PC-3 (cell line): ENCODE measurements at regions of chr1 and their contacts with region 1.

Region 1: GRCh38 chr1:23772049-23772853 is 6.0 kb upstream of the PITHD1 start:
- DNase-seq: peak; percentile 88
- ATAC-seq: peak; percentile 99
- H3K4me3 ChIP-seq: peak overlapping the region; percentile 46; the same call in 1 of the 2 replicates
- H3K27ac ChIP-seq: no peak overlapping the region
- H3K4me1 ChIP-seq: peaks cover 10% of the 10 kb centered on the region
- H3K27me3 ChIP-seq: no peaks in the 10 kb centered on the region
- CTCF ChIP-seq: peak; percentile 90

Region 2: GRCh38 chr1:23657659-23658275 is 114.5 kb before region 1 on chr1:
- CTCF ChIA-PET with region 1: no interaction called
- POLR2A ChIA-PET with region 1: no interaction called
- intact Hi-C with region 1: no loop called
- DNase-seq: peak; percentile 49
- ATAC-seq: peak; percentile 77; the same call in 1 of the 2 replicates
- H3K4me3 ChIP-seq: no peak overlapping the region
- H3K27ac ChIP-seq: no peak overlapping the region
- H3K4me1 ChIP-seq: no peaks in the 10 kb centered on the region
- H3K27me3 ChIP-seq: peaks cover 2% of the 10 kb centered on the region; the same call in 1 of the 2 replicates
- CTCF ChIP-seq: peak; percentile 80

Region 3: GRCh38 chr1:23800400-23801337 is 28.4 kb after region 1 on chr1 and contains the start of gene GALE:
- CTCF ChIA-PET with region 1: interaction called, 10 read pairs
- POLR2A ChIA-PET with region 1: no interaction called
- intact Hi-C with region 1: no loop called
- DNase-seq: peak; percentile 93
- ATAC-seq: peak; percentile 57
- H3K4me3 ChIP-seq: peak within 1 kb of the TSS; percentile 93
- H3K27ac ChIP-seq: peak within 1 kb of the TSS; percentile 96
- H3K4me1 ChIP-seq: peaks cover 21% of the 10 kb centered on the region
- H3K27me3 ChIP-seq: no peaks in the 10 kb centered on the region
- CTCF ChIP-seq: no peak
- total RNA-seq, gene GALE: 86.0 and 86.4 TPM in 2 replicates

Region 4: DNA sequence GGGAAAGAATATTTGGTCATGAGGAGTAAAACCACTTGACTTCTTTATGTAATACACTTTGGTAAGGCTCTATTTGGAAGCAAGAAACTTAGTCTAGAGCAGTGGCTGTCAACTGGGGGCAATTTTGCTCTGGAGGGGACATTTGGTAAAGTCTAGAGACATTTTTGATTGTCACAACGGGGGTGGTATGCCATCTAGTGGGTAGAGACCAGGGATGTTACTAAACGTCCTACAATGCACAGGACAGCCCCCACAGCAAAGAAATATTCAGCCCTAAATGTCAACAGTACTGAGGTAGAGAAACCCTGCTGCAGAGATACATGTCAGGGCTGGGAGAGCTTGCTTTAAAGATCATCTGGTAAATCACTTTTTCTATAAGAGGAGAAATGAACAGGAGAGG is 82.3 kb after region 1 on chr1:
- CTCF ChIA-PET with region 1: interaction called, 3 read pairs
- POLR2A ChIA-PET with region 1: no interaction called
- intact Hi-C with region 1: loop called (anchors 1 kb)
- DNase-seq: no peak
- ATAC-seq: no peak
- H3K4me3 ChIP-seq: no peak overlapping the region
- H3K27ac ChIP-seq: no peak overlapping the region
- H3K4me1 ChIP-seq: no peaks in the 10 kb centered on the region
- H3K27me3 ChIP-seq: no peaks in the 10 kb centered on the region
- CTCF ChIP-seq: peak; percentile 54; the same call in 1 of the 2 replicates